ENCODE measurements at regions of chr9 and their contacts with region 1.

Region 1: DNA sequence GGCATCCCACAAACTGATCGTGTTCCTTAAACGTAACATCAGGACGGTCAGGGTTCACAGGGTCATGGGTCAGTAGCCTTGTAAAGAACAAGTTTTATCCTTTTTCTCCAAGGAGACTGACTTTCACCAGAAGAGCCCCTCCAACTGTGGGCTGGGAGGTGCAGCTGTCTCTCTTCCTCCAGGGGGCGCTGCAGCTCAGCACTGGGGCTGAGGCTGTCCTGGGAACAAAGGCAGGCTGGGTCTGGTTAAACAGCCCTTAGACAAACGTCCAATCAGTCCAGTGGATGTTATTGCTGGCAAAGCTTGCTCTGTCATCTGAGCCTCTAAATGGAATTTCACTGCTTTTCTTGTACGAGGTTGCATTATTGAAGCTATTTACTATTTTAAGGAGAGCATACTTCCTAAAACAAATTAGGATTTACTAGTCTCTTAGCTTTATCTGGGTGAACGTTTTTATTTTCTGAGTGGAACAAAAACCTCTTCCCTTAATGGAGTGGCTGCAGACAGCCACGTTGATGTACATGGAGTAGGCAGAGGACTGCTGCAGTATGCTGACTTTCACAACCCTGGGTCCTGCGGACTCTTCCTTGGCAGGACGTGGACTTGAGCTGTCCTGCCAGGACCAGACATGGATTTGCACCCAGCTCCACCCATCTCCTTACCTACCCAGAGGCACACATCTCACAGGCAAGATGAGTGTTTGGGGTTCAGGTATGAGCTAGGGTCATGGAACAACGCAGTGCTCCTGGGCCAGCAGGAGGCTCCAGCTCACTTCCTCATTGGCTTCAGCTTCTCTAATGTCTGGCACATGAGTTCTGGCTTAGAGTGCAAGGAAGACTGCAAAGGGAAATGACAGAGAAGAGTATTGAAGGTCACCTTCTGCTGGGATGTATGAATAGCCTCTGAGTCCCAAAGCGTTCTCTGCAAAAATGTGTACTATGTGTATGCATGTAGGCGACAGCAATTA is 7.8 kb downstream of the EXOSC2 start:
- DNase-seq: peak; percentile 56
- CTCF ChIP-seq: peak; percentile 81

Region 2: GRCh38 chr9:130712564-130713285 is 11.4 kb after region 1 on chr9:
- CTCF ChIA-PET with region 1: interaction called, 51 read pairs
- POLR2A ChIA-PET with region 1: interaction called, 3 read pairs
- DNase-seq: peak; percentile 98
- CTCF ChIP-seq: no peak

Region 3: DNA sequence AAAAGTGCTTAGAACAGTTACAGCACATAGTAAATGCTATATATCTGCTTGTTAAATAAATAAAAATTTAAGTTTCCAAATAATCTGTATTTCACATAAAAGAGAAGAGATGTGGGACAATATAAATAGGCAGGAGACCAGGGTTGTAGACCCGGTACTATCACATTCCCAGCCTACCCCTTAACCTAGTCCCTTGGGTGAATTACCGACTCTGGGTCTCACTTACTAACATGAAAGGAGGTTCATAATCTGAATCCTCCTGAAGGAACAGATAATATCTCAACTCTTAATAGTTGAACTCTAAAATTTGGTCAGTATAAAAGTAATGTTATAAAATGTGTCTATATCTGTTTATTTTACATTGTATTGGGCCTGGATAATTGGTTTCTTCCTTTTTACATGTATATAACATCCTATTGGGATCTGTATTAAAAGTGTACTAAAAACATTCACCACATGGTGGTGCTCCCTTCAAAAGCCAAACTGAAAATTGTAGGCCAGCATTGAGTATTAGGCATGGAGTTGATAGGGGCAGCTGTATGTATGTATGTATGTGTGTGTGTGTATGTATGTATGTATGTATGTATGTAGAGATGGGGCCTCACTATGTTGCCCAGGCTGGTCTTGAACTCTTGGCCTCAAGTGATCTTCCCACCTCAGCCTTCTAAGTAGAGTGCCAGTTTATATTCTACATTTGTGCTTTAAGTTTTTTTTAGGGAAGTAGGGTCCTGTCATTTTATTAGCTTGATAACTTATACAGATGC is 69.5 kb after region 1 on chr9:
- CTCF ChIA-PET with region 1: interaction called, 14 read pairs
- POLR2A ChIA-PET with region 1: no interaction called
- DNase-seq: peak; percentile 50
- CTCF ChIP-seq: peak; percentile 55

Region 4: DNA sequence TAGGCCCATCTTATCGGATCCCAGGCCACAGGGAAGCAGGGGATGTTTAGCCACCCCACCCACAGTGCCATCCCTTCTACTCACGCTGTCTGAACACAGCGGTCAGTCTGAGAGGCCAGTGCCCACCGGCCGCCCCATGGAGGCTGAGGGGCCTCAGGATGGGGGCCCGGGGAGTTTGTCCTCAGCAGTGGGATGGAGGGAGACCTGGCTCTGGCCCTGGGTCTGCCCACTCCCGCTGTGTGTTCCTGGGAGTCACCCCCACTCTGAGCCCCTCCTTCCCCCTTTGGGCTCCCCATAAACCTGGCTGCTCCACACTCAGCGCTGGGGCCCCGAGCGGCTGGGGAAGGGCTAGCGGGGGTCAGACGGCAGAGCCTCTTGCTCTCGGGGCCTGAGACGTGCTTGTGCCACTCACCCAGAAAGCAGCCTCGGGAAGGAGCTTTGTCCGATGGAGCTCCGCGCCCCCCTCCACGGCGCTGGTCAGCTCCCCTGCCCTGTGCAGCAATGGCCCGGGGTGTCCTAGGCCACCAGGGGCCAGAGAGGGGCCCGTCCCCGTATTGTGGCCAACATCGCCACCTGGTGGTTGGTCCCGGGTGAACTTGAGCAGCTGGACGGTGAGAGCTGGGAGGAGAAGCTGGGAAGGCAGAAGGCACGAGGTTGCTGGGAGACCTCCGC is 296.7 kb after region 1 on chr9:
- CTCF ChIA-PET with region 1: interaction called, 20 read pairs
- POLR2A ChIA-PET with region 1: no interaction called
- DNase-seq: peak; percentile 81
- CTCF ChIP-seq: peak; percentile 45